ENCODE measurements at regions of chr6 and their contacts with region 1.

Region 1: DNA sequence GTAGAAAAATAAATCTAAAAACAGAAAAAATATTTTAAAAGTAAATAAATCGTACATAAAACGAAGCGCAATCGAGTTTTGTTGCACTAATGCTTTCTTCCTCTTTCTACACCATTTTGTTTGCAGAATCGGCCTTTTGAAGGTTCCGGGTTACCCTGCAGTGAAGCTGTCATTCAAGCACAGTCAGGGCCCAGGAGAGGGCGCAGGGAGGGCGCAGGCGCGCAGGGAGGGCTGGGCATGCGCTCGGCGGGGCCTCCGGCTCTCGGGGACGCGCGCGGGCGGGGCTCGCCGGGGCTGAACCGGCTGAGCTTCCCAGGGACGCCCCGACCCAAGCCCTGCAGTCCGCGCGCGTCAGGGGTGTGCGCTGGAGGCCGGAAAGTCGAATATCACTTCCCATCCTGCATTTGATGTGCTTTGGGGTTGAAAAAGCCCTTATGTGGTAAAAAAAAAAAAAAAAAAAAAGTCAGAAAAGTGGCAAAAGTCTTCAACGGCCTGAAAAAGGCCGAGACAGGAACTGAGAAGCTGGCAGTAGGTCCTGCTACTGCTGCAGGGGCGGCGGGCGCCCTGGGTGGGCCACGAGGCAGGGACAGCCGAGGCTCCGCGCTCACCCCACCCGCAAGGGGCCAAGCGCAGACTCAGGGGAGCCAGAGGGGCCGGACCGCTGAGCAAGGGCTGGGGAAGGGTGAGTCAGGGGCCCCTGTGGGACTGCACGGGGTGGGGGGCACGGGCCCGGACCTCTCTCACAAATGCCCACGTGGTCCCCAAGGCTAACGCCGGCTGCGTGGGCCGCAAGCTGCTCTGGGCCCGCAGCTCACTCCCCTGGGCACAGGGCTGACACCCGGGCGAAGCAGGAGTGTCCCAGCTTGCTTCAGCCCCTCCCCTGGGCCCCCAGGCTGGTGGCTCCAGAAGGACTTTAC is 40.5 kb downstream of the THBS2 start:
- DNase-seq: peak; percentile 96
- H3K4me3 Mint-ChIP-seq: peak overlapping the region; percentile 59
- H3K27ac Mint-ChIP-seq: no peak overlapping the region
- H3K4me1 Mint-ChIP-seq: peaks cover 7% of the 10 kb centered on the region
- H3K27me3 Mint-ChIP-seq: no peaks in the 10 kb centered on the region

Region 2: GRCh38 chr6:168895102-168895812 is 317.9 kb before region 1 on chr6:
- intact Hi-C with region 1: loop called (anchors 10 kb)
- DNase-seq: peak; percentile 93
- H3K4me3 Mint-ChIP-seq: peak overlapping the region; percentile 54
- H3K27ac Mint-ChIP-seq: no peak overlapping the region
- H3K4me1 Mint-ChIP-seq: peaks cover 9% of the 10 kb centered on the region
- H3K27me3 Mint-ChIP-seq: peaks cover 3% of the 10 kb centered on the region

Region 3: GRCh38 chr6:169200893-169201514 is 12.2 kb before region 1 on chr6:
- intact Hi-C with region 1: no loop called
- DNase-seq: no peak
- H3K4me3 Mint-ChIP-seq: no peak overlapping the region
- H3K27ac Mint-ChIP-seq: no peak overlapping the region
- H3K4me1 Mint-ChIP-seq: no peaks in the 10 kb centered on the region
- H3K27me3 Mint-ChIP-seq: no peaks in the 10 kb centered on the region

Region 4: DNA sequence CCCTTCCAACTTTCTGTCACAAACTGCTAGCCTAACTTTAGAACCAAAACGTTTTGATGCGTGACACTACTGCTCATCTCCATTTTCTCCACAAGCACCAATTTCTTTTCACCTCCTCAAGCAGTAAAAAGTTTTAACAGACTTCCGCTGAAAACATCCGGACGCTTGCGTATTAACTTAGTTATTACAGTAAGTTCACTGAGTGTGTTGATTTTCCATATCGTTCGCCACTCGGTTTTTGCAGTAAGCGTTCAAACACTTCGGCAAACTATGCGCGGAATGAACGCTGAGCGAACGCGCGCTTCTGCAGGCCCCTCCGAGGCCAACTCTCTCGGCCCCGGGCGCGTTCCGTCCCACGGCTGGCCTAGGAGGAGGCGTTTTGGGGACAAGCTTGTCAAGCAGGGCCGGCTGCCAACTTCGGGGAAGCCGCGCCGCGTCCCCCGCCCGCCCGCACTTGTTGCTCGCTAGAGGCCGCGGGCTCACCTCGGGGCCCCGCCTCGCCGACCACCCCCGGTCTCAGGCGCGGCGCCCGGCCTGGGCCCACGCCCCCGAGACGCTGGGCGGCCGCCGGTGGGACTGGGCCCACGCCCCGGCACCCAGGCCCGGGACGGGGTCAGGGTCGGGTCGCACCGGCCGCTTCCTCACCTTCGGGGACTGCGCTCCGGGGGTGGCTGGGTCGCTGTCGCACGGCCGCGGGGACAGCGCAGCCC is 510.2 kb after region 1 on chr6:
- intact Hi-C with region 1: loop called (anchors 5 kb)
- DNase-seq: peak; percentile 89
- H3K4me3 Mint-ChIP-seq: peak overlapping the region; percentile 90
- H3K27ac Mint-ChIP-seq: peak overlapping the region; percentile 94
- H3K4me1 Mint-ChIP-seq: peaks cover 28% of the 10 kb centered on the region
- H3K27me3 Mint-ChIP-seq: peaks cover 5% of the 10 kb centered on the region

Measured in activated CD4-positive, alpha-beta T cell treated with anti-CD3 and anti-CD28 coated beads, Interleukin-2, amount 10 ng/mL, durations not matched to agents 24 days and 14 days (primary cell).